ENCODE measurements at regions of chr12 and their contacts with region 1.

Region 1: GRCh38 chr12:132776816-132777568 is 15.4 kb upstream of the ANKLE2 start:
- DNase-seq: no peak
- H3K4me3 ChIP-seq: no peak overlapping the region
- H3K27ac ChIP-seq: no peak overlapping the region
- H3K4me1 ChIP-seq: no peaks in the 10 kb centered on the region
- H3K27me3 ChIP-seq: no peaks in the 10 kb centered on the region
- CTCF ChIP-seq: no peak
- EP300 ChIP-seq: no peak
- POLR2A ChIP-seq: no peak
- RAD21 ChIP-seq: no peak

Region 2: GRCh38 chr12:132761032-132761920 is 15.7 kb before region 1 on chr12 and contains the start of gene ANKLE2:
- CTCF ChIA-PET with region 1: interaction called, 8 read pairs
- POLR2A ChIA-PET with region 1: interaction called, 30 read pairs
- DNase-seq: no peak
- H3K4me3 ChIP-seq: peak within 1 kb of the TSS; percentile 82 to 100 (median 94)
- H3K27ac ChIP-seq: peak within 1 kb of the TSS; percentile 83
- H3K4me1 ChIP-seq: peaks cover 0 to 4% (median 3%) of the 10 kb centered on the region in 4 experiments; a peak in 5 of 7 replicates
- H3K27me3 ChIP-seq: no peaks in the 10 kb centered on the region
- CTCF ChIP-seq: no peak
- EP300 ChIP-seq: no peak
- POLR2A ChIP-seq: peak in 1 of 2 experiments; percentile 18; a peak in 1 of 3 replicates
- RAD21 ChIP-seq: no peak
- total RNA-seq, gene ANKLE2: 58.2 and 64.9 TPM in 2 replicates

Region 3: GRCh38 chr12:132828706-132829534 is 51.9 kb after region 1 on chr12 and contains the start of gene GOLGA3:
- CTCF ChIA-PET with region 1: no interaction called
- POLR2A ChIA-PET with region 1: no interaction called
- DNase-seq: peak; percentile 85 to 92
- H3K4me3 ChIP-seq: peak within 1 kb of the TSS; percentile 57 to 96 (median 93)
- H3K27ac ChIP-seq: peak within 1 kb of the TSS; percentile 100
- H3K4me1 ChIP-seq: peaks cover 0 to 9% (median under 1%) of the 10 kb centered on the region in 4 experiments; a peak in 1 of 7 replicates
- H3K27me3 ChIP-seq: no peaks in the 10 kb centered on the region
- CTCF ChIP-seq: no peak
- EP300 ChIP-seq: peak in 1 of 2 experiments; percentile 12; a peak in 1 of 3 replicates
- POLR2A ChIP-seq: peak; percentile 51 to 75; a peak in 2 of 3 replicates
- RAD21 ChIP-seq: no peak
- total RNA-seq, gene GOLGA3: 33.1 and 33.4 TPM in 2 replicates